Caco-2 (cell line): ENCODE measurements at regions of chr4 and their contacts with region 1.

Region 1: GRCh38 chr4:93791570-93792195 is 36.9 kb upstream of the ATOH1 start:
- DNase-seq: peak; percentile 44 to 57
- H3K4me3 ChIP-seq: no peak overlapping the region
- H3K4me3 Mint-ChIP-seq: no peak overlapping the region
- H3K27ac Mint-ChIP-seq: no peak overlapping the region
- H3K4me1 ChIP-seq: no peaks in the 10 kb centered on the region
- H3K4me1 Mint-ChIP-seq: no peaks in the 10 kb centered on the region
- H3K27me3 ChIP-seq: no peaks in the 10 kb centered on the region
- H3K27me3 Mint-ChIP-seq: peaks cover 5% of the 10 kb centered on the region
- CTCF ChIP-seq: peak; percentile 75 to 80

Region 2: DNA sequence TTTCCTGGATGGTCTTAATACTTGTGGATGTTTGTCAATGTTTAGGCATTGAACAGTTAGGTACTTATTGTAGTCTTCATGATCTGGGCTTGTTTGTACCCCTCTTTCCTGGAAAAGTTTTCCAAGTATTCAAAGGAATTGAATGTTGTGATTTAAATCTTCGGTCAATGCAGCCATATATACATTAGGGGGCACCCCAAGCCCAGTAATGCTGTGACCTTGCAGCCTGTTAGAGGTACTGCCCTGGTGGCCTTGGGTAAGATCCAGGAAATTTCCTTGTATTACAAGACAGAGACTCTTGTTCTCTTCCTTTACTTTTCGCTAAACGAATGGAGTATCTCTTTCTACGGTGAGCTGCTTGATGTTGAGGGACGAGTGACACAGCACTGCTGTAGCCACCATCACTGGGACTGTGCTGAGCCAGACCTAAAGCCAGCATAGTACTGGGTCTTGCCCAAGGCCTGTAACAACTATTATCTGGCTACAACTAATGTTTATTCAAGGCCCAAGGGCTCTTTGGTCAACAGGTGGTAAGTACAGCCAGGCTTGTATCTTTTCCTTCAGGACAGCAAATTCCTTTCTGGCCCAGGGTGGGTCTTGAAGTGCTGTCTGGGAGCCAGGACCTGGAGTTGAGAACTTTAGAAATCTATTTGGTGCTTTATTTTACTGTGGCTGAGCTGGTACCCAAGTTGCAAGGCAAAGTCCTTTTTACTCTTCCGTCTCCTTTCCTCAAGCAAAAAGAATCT is 81.4 kb before region 1 on chr4:
- CTCF ChIA-PET with region 1: no interaction called
- POLR2A ChIA-PET with region 1: no interaction called
- intact Hi-C with region 1: loop called (anchors 1 kb)
- DNase-seq: peak; percentile 32 to 41
- H3K4me3 ChIP-seq: no peak overlapping the region
- H3K4me3 Mint-ChIP-seq: no peak overlapping the region
- H3K27ac Mint-ChIP-seq: no peak overlapping the region
- H3K4me1 ChIP-seq: no peaks in the 10 kb centered on the region
- H3K4me1 Mint-ChIP-seq: no peaks in the 10 kb centered on the region
- H3K27me3 ChIP-seq: no peaks in the 10 kb centered on the region
- H3K27me3 Mint-ChIP-seq: peaks cover 7% of the 10 kb centered on the region
- CTCF ChIP-seq: peak; percentile 16 to 46

Region 3: DNA sequence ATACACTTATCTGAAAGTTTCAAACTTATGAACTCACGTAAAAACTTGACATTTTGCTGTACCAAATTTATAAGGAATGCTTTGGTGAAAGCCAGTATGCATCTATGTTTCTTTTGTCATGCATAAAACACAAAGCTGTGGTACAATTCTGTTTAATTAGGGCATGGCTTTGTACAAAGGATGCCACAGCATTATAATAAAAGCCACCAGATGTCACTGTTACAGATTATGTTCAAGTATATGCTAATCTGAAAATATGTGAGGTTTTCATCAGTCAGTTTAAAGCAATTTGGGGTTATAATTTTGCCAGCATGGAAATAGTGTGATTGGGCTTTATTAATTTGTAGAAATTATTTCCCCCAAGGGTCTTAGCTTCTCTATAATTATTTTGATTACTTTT is 105.9 kb after region 1 on chr4:
- CTCF ChIA-PET with region 1: no interaction called
- POLR2A ChIA-PET with region 1: no interaction called
- intact Hi-C with region 1: loop called (anchors 2 kb)
- DNase-seq: no peak
- H3K4me3 ChIP-seq: no peak overlapping the region
- H3K4me3 Mint-ChIP-seq: no peak overlapping the region
- H3K27ac Mint-ChIP-seq: no peak overlapping the region
- H3K4me1 ChIP-seq: no peaks in the 10 kb centered on the region
- H3K4me1 Mint-ChIP-seq: no peaks in the 10 kb centered on the region
- H3K27me3 ChIP-seq: no peaks in the 10 kb centered on the region
- H3K27me3 Mint-ChIP-seq: no peaks in the 10 kb centered on the region
- CTCF ChIP-seq: peak in 1 of 2 experiments; percentile 29

Region 4: DNA sequence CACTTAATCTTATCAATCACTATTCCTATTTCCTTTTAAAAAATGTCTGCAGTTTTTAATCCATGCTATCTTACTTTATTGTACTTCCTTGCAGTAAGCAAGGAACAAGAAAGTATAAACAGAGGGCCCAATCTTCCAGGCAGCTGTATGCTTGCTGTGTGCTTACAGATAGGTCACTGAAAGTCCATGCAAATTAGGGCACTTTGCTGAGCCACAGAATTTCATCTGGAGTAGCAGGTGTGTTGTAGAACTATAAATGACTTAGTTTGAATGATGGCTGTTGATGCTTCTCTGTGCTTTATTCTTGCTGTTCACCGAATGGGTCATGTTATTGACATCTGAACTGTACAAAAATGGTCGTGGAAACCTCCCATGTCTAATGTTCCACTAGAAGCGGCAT is 191.5 kb after region 1 on chr4:
- CTCF ChIA-PET with region 1: no interaction called
- POLR2A ChIA-PET with region 1: no interaction called
- intact Hi-C with region 1: no loop called
- DNase-seq: no peak
- H3K4me3 ChIP-seq: no peak overlapping the region
- H3K4me3 Mint-ChIP-seq: no peak overlapping the region
- H3K27ac Mint-ChIP-seq: no peak overlapping the region
- H3K4me1 ChIP-seq: no peaks in the 10 kb centered on the region
- H3K4me1 Mint-ChIP-seq: no peaks in the 10 kb centered on the region
- H3K27me3 ChIP-seq: no peaks in the 10 kb centered on the region
- H3K27me3 Mint-ChIP-seq: peaks cover 4% of the 10 kb centered on the region
- CTCF ChIP-seq: no peak

Region 5: GRCh38 chr4:94127707-94128328 is 336.1 kb after region 1 on chr4:
- CTCF ChIA-PET with region 1: interaction called, 3 read pairs
- POLR2A ChIA-PET with region 1: no interaction called
- intact Hi-C with region 1: loop called (anchors 1 kb)
- DNase-seq: peak in 1 of 2 experiments; percentile 13
- H3K4me3 ChIP-seq: no peak overlapping the region
- H3K4me3 Mint-ChIP-seq: no peak overlapping the region
- H3K27ac Mint-ChIP-seq: no peak overlapping the region
- H3K4me1 ChIP-seq: no peaks in the 10 kb centered on the region
- H3K4me1 Mint-ChIP-seq: no peaks in the 10 kb centered on the region
- H3K27me3 ChIP-seq: no peaks in the 10 kb centered on the region
- H3K27me3 Mint-ChIP-seq: peaks cover 3% of the 10 kb centered on the region
- CTCF ChIP-seq: peak; percentile 29 to 45

Region 6: GRCh38 chr4:94256828-94257227 is 465.1 kb after region 1 on chr4:
- CTCF ChIA-PET with region 1: no interaction called
- POLR2A ChIA-PET with region 1: no interaction called
- intact Hi-C with region 1: loop called (anchors 1 kb)
- DNase-seq: no peak
- H3K4me3 ChIP-seq: no peak overlapping the region
- H3K4me3 Mint-ChIP-seq: no peak overlapping the region
- H3K27ac Mint-ChIP-seq: no peak overlapping the region
- H3K4me1 ChIP-seq: no peaks in the 10 kb centered on the region
- H3K4me1 Mint-ChIP-seq: no peaks in the 10 kb centered on the region
- H3K27me3 ChIP-seq: no peaks in the 10 kb centered on the region
- H3K27me3 Mint-ChIP-seq: no peaks in the 10 kb centered on the region
- CTCF ChIP-seq: peak; percentile 18 to 30

Region 7: GRCh38 chr4:94390804-94391410 is 599.2 kb after region 1 on chr4:
- CTCF ChIA-PET with region 1: no interaction called
- POLR2A ChIA-PET with region 1: no interaction called
- intact Hi-C with region 1: loop called (anchors 10 kb)
- DNase-seq: peak in 1 of 2 experiments; percentile 30
- H3K4me3 ChIP-seq: no peak overlapping the region
- H3K4me3 Mint-ChIP-seq: no peak overlapping the region
- H3K27ac Mint-ChIP-seq: no peak overlapping the region
- H3K4me1 ChIP-seq: no peaks in the 10 kb centered on the region
- H3K4me1 Mint-ChIP-seq: no peaks in the 10 kb centered on the region
- H3K27me3 ChIP-seq: no peaks in the 10 kb centered on the region
- H3K27me3 Mint-ChIP-seq: no peaks in the 10 kb centered on the region
- CTCF ChIP-seq: peak; percentile 53 to 59